AG04450 (cell line): ENCODE measurements at regions of chr19 and their contacts with region 1.

Region 1: DNA sequence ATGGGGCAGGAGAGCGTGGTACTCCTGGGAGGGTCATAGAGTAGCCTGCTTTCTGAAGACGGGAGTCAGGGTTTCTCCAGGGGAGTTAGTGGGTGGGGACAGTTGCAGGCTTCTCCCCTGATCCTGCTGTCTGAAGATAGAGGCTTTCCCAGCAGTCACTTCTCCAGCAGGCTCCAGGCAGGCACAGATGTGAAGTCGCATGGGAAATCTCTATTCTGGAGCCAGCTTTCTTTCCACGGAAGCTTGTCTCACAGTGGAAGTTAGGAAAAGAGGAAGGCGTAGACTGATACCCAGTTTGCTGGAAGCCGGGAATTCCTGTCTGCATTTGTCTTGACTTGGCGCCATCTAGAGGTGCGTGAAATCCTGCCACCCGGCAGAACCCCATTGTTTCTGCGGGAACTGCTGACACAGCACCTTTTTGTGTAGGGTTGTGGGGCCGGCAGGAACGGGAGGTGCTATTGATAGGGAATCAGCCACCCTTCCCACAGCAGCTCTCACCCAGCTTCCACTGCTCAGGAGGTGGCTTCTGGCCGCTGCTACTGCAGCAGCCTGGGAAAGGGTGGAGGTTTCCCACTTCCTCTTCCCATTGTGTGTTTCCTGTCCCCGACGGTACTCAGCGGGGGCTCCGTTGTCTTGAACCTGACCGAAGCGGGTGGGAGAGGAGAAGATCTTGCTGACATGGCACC is 28.5 kb upstream of the NPAS1 start:
- DNase-seq: peak; percentile 74
- H3K4me3 ChIP-seq: no peak overlapping the region
- H3K27ac ChIP-seq: no peak overlapping the region
- H3K27me3 ChIP-seq: no peaks in the 10 kb centered on the region
- CTCF ChIP-seq: peak; percentile 95

Region 2: DNA sequence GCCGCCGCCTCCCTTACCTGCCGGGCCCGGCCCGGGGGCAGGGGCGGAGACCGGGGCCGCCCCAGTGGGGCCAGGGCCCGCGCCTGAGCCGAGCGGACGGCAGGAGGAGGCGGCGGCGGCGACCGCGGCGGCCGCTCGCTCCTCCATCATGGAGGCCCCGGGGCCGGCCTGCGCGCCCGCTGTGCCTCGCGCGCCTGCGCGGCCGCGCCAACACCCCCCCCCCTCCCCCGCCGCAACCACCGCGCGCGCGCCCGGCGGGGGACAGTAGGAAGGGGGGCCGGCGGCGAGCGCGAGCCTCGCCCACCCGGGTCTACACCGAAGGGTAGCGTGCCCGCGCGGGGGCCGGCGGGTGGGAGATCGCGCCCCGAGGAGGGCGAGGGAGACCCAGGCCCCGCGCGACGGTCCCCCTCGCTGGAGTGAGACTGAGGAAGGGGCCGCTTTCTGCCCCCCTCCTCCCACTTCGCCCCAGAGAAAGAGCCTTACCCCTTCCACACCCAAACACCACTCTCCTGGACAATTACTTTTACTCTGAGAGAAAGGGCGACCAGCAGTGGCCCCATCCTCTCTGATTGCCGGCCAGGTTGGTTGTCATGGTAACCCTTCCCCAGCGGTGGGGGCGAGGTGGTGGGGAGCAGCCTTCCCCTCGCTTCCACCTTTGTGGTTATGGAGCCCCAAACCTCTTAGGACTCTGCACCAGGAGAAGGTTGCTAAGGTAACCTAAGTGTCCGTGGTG is 244.7 kb before region 1 on chr19 and contains the start of gene STRN4:
- CTCF ChIA-PET with region 1: interaction called, 18 read pairs
- POLR2A ChIA-PET with region 1: no interaction called
- DNase-seq: no peak
- H3K4me3 ChIP-seq: peak within 1 kb of the TSS; percentile 89
- H3K27ac ChIP-seq: peak within 1 kb of the TSS; percentile 47
- H3K27me3 ChIP-seq: no peaks in the 10 kb centered on the region
- CTCF ChIP-seq: no peak
- polyA plus RNA-seq, gene STRN4: 48.1 and 59.3 TPM in 2 replicates

Region 3: DNA sequence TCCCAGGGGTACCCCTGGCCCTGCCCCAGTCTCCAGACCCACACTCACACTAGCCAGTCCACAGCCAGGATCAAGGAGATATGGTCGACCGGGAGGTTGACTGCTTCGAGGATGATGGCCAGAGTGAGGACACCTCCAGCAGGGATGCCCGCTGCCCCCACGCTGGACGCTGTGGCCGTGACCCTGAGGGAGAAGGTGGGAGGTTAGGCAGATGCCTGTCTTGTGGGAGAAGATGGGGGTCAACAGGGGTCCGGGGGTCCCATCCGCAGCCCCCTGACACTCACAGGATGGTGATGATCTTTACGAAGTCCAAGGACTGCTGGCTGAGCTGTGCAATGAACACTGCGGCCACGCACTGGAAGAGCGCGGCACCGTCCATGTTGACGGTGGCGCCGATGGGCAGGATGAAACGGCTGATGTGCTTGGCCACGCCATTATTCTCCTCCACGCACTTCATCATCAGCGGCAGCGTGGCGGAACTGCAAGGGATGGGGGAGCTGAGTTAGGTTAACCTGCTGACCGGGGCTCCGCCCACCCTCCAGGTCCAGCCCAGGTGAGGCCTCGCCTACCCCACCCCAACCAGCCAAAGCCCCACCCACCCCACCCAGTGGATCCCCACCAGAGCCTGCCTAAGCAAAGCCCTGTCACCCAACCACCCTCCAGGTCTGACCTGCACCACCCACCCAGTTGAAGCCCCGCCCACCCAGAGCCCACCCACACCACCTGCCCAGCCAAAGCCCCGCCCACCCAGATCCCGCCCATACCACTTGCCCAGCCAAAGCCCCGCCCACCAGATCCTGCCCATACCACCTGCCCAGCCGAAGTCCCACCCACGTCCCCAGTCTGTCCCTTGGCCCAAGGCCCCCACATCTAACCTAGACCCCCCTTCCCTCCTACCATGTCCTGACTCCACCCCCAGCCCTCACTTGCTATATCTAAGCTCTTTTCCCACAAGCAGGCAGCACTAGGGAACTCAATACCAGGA is 213.9 kb before region 1 on chr19:
- CTCF ChIA-PET with region 1: interaction called, 11 read pairs
- POLR2A ChIA-PET with region 1: no interaction called
- DNase-seq: no peak
- H3K4me3 ChIP-seq: no peak overlapping the region
- H3K27ac ChIP-seq: no peak overlapping the region
- H3K27me3 ChIP-seq: no peaks in the 10 kb centered on the region
- CTCF ChIP-seq: no peak

Region 4: DNA sequence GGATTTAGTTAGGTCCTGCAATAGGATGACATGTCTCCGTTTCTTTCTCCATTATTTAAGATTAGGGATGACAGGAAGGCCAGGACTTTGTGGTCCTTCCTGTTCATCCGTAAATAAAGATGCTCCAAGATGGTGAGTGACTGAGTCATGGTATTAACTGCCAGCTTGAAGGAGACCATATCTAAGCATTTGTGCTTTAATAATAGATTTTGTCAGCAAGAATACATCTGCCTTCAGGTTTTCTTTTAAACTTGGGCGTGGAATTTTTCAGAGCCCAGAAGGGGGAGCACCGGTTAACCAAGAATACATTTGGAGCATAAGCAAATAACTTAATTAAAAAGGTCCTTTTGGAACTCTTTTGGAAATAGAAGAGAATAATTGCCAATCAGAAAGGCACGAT is 62.2 kb before region 1 on chr19:
- CTCF ChIA-PET with region 1: interaction called, 19 read pairs
- POLR2A ChIA-PET with region 1: no interaction called
- DNase-seq: no peak
- H3K4me3 ChIP-seq: no peak overlapping the region
- H3K27ac ChIP-seq: no peak overlapping the region
- H3K27me3 ChIP-seq: no peaks in the 10 kb centered on the region
- CTCF ChIP-seq: peak; percentile 40

Region 5: DNA sequence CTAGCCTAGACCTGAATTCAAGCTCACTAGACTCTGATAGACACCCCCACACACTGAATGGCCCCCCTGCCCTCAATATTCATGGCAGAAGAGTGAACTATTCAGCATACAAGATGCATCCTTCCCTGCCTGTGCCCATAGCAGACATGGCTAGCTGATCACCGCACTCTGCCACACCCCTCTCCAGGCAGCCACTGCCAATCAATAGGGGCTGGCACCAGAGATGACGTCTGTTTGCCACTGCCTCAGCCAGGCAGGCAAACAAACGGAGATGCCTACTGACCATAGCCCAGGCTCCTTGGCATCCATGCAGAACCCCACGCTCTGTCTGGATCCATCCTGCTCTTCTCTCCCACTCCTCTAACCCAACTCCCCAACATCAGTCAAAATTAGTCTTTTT is 14.7 kb after region 1 on chr19:
- CTCF ChIA-PET with region 1: interaction called, 32 read pairs
- POLR2A ChIA-PET with region 1: no interaction called
- DNase-seq: no peak
- H3K4me3 ChIP-seq: no peak overlapping the region
- H3K27ac ChIP-seq: no peak overlapping the region
- H3K27me3 ChIP-seq: no peaks in the 10 kb centered on the region
- CTCF ChIP-seq: no peak